Gastrocnemius medialis (tissue), 4 donors: ENCODE measurements at regions of chr4 and their contacts with region 1.

Region 1: GRCh38 chr4:138182838-138183426 is 59.2 kb downstream of the SLC7A11 start:
- DNase-seq: no peak
- ATAC-seq: peak; percentile 64 to 75
- H3K4me3 ChIP-seq: no peak overlapping the region
- H3K27ac ChIP-seq: no peak overlapping the region
- H3K4me1 ChIP-seq: peaks cover 11 to 21% of the 10 kb centered on the region in 2 donors
- H3K27me3 ChIP-seq: no peaks in the 10 kb centered on the region
- CTCF ChIP-seq: peak; percentile 45 to 66 (median 61)
- POLR2A ChIP-seq: no peak

Region 2: GRCh38 chr4:137124278-137124932 is 1058.5 kb before region 1 on chr4:
- in situ Hi-C with region 1: loop called in 1 of 4 experiments (anchors 10 kb)
- intact Hi-C with region 1: no loop called
- DNase-seq: no peak
- ATAC-seq: peak; percentile 89 to 96
- H3K4me3 ChIP-seq: peak overlapping the region; percentile 34 to 49 (median 36)
- H3K27ac ChIP-seq: no peak overlapping the region
- H3K4me1 ChIP-seq: no peaks in the 10 kb centered on the region
- H3K27me3 ChIP-seq: no peaks in the 10 kb centered on the region
- CTCF ChIP-seq: peak in 4 of 5 experiments; percentile 19 to 54 (median 40)
- POLR2A ChIP-seq: no peak

Region 3: DNA sequence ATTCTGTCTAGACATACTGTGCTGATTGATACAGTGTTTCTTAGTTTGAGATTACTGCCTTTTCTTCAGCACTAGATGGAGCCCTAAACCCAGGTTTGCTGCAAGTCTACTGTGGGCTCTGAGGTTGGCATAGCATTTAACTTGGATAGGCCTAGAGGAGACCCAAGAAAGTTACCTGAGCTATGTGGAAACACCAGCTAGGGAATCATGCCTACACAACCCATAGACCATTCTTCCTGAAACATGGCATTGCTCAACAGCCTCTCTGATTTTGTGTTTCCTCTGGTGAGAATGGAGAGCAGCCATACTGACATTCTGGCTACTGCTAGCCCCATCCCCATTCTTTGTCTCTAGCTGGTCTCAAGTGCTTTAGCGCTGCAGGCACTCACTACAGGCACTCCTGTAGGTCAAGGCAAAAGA is 363.0 kb before region 1 on chr4:
- in situ Hi-C with region 1: loop called in 1 of 4 experiments (anchors 25 kb)
- intact Hi-C with region 1: loop called (anchors 5 kb)
- DNase-seq: no peak
- ATAC-seq: peak in 1 of 2 donors; percentile 46
- H3K4me3 ChIP-seq: no peak overlapping the region
- H3K27ac ChIP-seq: no peak overlapping the region
- H3K4me1 ChIP-seq: peaks cover 0 to 4% of the 10 kb centered on the region in 2 donors
- H3K27me3 ChIP-seq: no peaks in the 10 kb centered on the region
- CTCF ChIP-seq: peak in 3 of 5 experiments; percentile 14 to 42 (median 20)
- POLR2A ChIP-seq: no peak

Region 4: GRCh38 chr4:138680989-138681604 is 498.2 kb after region 1 on chr4:
- in situ Hi-C with region 1: loop called in 1 of 4 experiments (anchors 25 kb)
- intact Hi-C with region 1: loop called (anchors 5 kb)
- DNase-seq: peak; percentile 50 to 53
- ATAC-seq: peak; percentile 67 to 70
- H3K4me3 ChIP-seq: no peak overlapping the region
- H3K27ac ChIP-seq: no peak overlapping the region
- H3K4me1 ChIP-seq: peaks cover 3 to 20% of the 10 kb centered on the region in 2 donors
- H3K27me3 ChIP-seq: no peaks in the 10 kb centered on the region
- CTCF ChIP-seq: peak; percentile 76 to 93 (median 84)
- POLR2A ChIP-seq: no peak